Testis (tissue), 5 donors: ENCODE measurements at regions of chr12 and their contacts with region 1.

Region 1: GRCh38 chr12:70733385-70733784 is 96.2 kb upstream of the PTPRB start:
- DNase-seq: peak; percentile 28
- H3K4me3 ChIP-seq: no peak overlapping the region
- H3K27ac ChIP-seq: no peak overlapping the region
- H3K4me1 ChIP-seq: no peaks in the 10 kb centered on the region
- H3K27me3 ChIP-seq: no peaks in the 10 kb centered on the region
- CTCF ChIP-seq: peak; percentile 20 to 78 (median 62)
- POLR2A ChIP-seq: no peak

Region 2: DNA sequence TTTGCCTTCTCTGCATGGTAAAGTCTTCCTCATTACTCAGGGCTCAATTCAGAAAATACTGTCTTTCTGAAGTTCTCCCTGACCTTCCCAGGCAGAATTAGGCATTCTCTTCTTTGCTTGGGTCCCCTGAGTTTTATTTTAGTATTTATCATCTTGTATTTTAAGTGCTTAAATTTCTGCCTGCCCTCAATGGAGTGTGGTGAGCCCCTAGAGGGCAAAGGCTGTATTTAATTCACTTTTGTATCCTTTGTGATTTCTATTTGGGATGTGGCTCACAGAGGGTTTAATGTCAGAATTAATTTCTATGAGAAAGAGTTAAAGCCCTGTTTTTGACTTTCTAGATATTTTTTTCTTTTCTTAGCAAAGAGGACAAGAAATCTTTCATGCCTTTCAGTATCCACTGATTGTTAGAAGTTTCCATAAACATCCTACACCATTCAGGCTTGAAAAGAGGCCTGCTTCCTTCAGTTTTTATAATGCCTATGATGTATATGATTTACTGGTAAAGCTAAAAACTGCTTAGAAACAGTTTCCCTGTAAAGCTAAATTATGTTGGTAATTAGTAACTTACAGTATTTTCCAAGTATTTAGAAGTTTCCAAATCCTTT is 40.6 kb before region 1 on chr12:
- intact Hi-C with region 1: no loop called
- DNase-seq: no peak
- H3K4me3 ChIP-seq: no peak overlapping the region
- H3K27ac ChIP-seq: no peak overlapping the region
- H3K4me1 ChIP-seq: no peaks in the 10 kb centered on the region
- H3K27me3 ChIP-seq: no peaks in the 10 kb centered on the region
- CTCF ChIP-seq: peak in 2 of 3 experiments; percentile 35 to 43
- POLR2A ChIP-seq: no peak

Region 3: DNA sequence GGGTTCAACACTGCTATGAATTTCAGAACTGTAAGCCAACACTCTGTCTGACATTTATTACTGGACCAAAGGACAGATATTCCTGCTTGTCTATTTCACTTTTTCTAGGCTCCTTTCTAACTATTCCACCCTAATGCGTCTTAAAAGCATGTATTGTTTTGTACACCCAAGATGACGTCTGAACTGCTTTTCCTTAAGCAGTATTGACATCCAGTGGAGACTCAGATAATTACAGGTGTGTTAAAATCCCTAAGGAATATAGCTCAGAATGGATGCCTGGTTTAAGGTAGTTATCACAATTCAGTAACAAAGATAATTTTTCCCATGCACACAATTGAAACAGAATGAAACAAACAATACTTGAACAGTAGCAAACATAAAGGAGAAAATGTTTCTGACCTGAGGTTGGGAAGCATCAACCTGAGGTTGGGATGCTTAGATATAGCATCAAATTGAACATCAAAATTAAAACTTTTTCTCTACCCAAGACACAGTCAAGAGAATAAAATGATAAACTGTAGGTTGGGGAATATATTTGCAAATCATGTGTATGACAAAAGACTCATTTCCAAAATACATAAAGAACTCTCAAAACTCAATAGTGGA is 280.9 kb after region 1 on chr12:
- intact Hi-C with region 1: loop called (anchors 10 kb)
- DNase-seq: no peak
- H3K4me3 ChIP-seq: no peak overlapping the region
- H3K27ac ChIP-seq: no peak overlapping the region
- H3K4me1 ChIP-seq: no peaks in the 10 kb centered on the region
- H3K27me3 ChIP-seq: no peaks in the 10 kb centered on the region
- CTCF ChIP-seq: peak in 1 of 3 experiments; percentile 39
- POLR2A ChIP-seq: no peak